Activated CD8-positive, alpha-beta T cell treated with anti-CD3 and anti-CD28 coated beads, Interleukin-2, amount 10 ng/mL, durations not matched to agents 7 days and 5 days (primary cell): ENCODE measurements at regions of chr4 and their contacts with region 1.

Region 1: DNA sequence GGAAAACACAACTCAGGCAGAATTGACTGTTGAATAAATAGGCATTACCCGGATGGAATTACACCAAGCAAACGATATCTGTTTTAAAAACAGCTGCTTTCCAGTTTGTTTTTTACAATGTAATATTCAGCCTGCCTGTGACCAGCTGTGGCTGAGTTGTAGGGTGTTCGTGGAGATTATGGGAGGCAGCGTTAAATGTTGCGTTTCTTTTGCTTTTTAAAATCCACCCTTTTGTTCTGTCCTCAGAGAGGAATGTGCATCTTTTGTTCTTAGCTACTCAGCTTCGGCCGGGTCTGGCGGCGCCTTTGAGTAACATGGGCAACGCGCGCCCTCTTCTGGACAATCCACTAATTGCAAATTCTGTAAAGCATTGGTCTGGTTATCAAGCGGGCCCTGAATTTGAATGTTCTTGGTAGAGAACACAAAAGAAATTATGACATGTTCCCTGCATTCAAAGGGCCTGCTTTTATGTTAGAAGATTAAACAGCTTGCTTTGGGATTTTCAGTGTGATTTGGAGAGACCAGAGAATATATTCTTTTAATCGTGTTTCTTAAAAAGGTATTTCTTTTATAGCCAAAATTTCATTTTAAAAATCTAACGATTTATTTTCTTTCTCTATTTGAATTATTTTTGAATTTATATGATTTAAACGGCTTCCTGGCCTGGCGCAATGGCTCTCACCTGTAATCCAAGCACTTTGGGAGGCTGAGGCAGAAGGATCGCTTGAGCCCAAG is 76.3 kb upstream of the TRIM2 start:
- DNase-seq: peak; percentile 91
- ATAC-seq: peak; percentile 88
- H3K4me3 Mint-ChIP-seq: no peak overlapping the region
- H3K27ac Mint-ChIP-seq: no peak overlapping the region
- H3K4me1 Mint-ChIP-seq: peaks cover 7% of the 10 kb centered on the region
- H3K27me3 Mint-ChIP-seq: peaks cover 22% of the 10 kb centered on the region

Region 2: DNA sequence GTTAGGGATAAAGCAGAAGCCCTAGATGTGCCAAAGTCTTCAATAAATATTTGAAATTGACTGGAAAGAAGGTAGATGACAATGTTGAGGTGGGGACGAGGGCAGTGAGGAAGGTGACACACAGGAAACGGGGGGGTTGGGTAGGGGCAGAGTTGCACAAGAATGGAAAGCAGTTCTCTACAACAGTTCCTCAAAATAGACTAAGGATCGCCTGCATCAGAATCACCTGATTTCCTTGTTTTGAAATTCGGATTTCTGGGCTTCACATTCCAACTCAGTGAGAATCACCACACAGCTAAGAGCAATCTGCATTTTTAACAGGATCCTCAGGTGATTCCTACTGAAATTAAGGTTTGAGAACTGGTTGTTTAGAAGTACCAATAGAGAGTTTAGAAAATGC is 277.6 kb before region 1 on chr4:
- CTCF ChIA-PET with region 1: interaction called, 53 read pairs
- POLR2A ChIA-PET with region 1: no interaction called
- DNase-seq: peak; percentile 56
- ATAC-seq: peak; percentile 36
- H3K4me3 Mint-ChIP-seq: no peak overlapping the region
- H3K27ac Mint-ChIP-seq: no peak overlapping the region
- H3K4me1 Mint-ChIP-seq: peaks cover 20% of the 10 kb centered on the region
- H3K27me3 Mint-ChIP-seq: no peaks in the 10 kb centered on the region

Region 3: GRCh38 chr4:152917543-152918395 is 210.2 kb before region 1 on chr4:
- CTCF ChIA-PET with region 1: no interaction called
- POLR2A ChIA-PET with region 1: no interaction called
- DNase-seq: no peak
- ATAC-seq: no peak
- H3K4me3 Mint-ChIP-seq: no peak overlapping the region
- H3K27ac Mint-ChIP-seq: no peak overlapping the region
- H3K4me1 Mint-ChIP-seq: no peaks in the 10 kb centered on the region
- H3K27me3 Mint-ChIP-seq: no peaks in the 10 kb centered on the region

Region 4: GRCh38 chr4:153083447-153083947 is 44.4 kb before region 1 on chr4:
- CTCF ChIA-PET with region 1: interaction called, 323 read pairs
- POLR2A ChIA-PET with region 1: interaction called, 4 read pairs
- DNase-seq: peak; percentile 68
- ATAC-seq: peak; percentile 61
- H3K4me3 Mint-ChIP-seq: no peak overlapping the region
- H3K27ac Mint-ChIP-seq: peak overlapping the region; percentile 60
- H3K4me1 Mint-ChIP-seq: peaks cover 62% of the 10 kb centered on the region
- H3K27me3 Mint-ChIP-seq: peaks cover 28% of the 10 kb centered on the region

Region 5: GRCh38 chr4:153095448-153096204 is 32.3 kb before region 1 on chr4:
- CTCF ChIA-PET with region 1: interaction called, 30 read pairs
- POLR2A ChIA-PET with region 1: no interaction called
- DNase-seq: no peak
- ATAC-seq: no peak
- H3K4me3 Mint-ChIP-seq: no peak overlapping the region
- H3K27ac Mint-ChIP-seq: no peak overlapping the region
- H3K4me1 Mint-ChIP-seq: peaks cover 1% of the 10 kb centered on the region
- H3K27me3 Mint-ChIP-seq: peaks cover 17% of the 10 kb centered on the region

Region 6: DNA sequence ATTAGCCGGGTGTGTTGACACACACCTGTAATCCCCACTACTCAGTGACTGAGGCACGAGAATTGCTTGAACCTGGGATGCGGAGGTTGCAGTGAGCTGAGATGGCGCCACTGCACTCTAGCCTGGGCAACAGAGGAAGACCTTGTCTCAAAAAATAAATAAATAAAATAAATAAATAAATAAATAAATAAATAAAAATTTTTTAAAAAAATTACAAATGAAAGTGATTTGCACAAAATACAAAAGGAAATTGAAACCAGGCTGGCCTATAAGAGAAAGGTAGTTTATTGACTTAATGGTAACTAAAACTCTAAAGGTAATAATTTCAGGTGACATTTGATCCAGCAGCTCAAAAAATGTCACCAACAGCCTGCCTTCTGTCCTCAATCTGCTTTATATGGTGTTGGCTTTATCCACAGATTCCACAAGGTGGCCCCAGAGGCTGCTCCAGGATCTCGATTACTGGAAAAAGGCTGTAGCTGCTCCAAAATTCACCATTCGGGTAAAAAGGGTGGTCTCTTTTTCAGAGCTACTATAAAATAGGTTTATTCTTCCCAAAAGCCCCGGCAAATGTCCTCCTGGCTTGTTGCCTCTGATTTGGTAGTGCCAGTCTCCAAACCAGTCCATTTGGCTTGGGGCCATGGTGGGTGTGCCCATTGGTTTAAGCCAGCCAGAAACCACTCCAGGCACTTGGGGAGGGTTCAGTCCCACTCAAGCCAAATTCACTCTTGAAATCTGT is 14.9 kb after region 1 on chr4:
- CTCF ChIA-PET with region 1: interaction called, 10 read pairs
- POLR2A ChIA-PET with region 1: no interaction called
- DNase-seq: peak; percentile 61
- ATAC-seq: peak; percentile 74
- H3K4me3 Mint-ChIP-seq: no peak overlapping the region
- H3K27ac Mint-ChIP-seq: no peak overlapping the region
- H3K4me1 Mint-ChIP-seq: peaks cover 2% of the 10 kb centered on the region
- H3K27me3 Mint-ChIP-seq: peaks cover 22% of the 10 kb centered on the region

Region 7: GRCh38 chr4:153204247-153205027 is 76.5 kb after region 1 on chr4 and contains the start of gene TRIM2:
- CTCF ChIA-PET with region 1: no interaction called
- POLR2A ChIA-PET with region 1: no interaction called
- DNase-seq: no peak
- ATAC-seq: no peak
- H3K4me3 Mint-ChIP-seq: peak within 1 kb of the TSS; percentile 22
- H3K27ac Mint-ChIP-seq: no peak within 1 kb of the TSS
- H3K4me1 Mint-ChIP-seq: peaks cover 25% of the 10 kb centered on the region
- H3K27me3 Mint-ChIP-seq: peaks cover 20% of the 10 kb centered on the region
- total RNA-seq, gene TRIM2: 0.13 to 0.18 TPM